AG04450 (cell line): ENCODE measurements at regions of chr1 and their contacts with region 1.

Region 1: GRCh38 chr1:202462342-202463076 is 114.0 kb downstream of the PPP1R12B start:
- DNase-seq: no peak
- H3K4me3 ChIP-seq: no peak overlapping the region
- H3K27ac ChIP-seq: no peak overlapping the region
- H3K27me3 ChIP-seq: no peaks in the 10 kb centered on the region
- CTCF ChIP-seq: no peak

Region 2: DNA sequence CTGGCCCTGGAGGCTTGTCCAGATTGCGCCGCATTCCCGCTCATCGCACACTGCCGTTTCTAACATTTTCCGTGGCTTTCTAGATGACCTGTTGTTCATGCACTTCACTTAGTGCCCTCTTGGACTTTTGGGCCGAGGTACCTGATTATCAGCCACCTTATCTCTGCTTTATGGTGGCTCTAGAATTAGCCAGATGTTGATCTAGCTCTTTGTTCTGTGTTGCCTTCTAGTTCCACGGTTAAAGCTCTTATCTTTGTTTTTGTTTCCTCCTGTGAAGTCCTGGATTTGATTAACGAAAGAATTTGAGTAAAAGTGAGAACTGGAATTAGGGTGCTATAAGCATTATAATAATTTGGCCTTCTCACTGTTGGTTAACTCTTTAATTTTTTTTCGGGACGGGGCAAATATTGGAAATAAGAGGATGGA is 479.1 kb before region 1 on chr1:
- CTCF ChIA-PET with region 1: no interaction called
- POLR2A ChIA-PET with region 1: no interaction called
- DNase-seq: no peak
- H3K4me3 ChIP-seq: peak overlapping the region; percentile 88
- H3K27ac ChIP-seq: peak overlapping the region; percentile 61
- H3K27me3 ChIP-seq: no peaks in the 10 kb centered on the region
- CTCF ChIP-seq: no peak

Region 3: GRCh38 chr1:202405928-202406327 is 56.6 kb before region 1 on chr1:
- CTCF ChIA-PET with region 1: no interaction called
- POLR2A ChIA-PET with region 1: no interaction called
- DNase-seq: no peak
- H3K4me3 ChIP-seq: no peak overlapping the region
- H3K27ac ChIP-seq: no peak overlapping the region
- H3K27me3 ChIP-seq: no peaks in the 10 kb centered on the region
- CTCF ChIP-seq: no peak

Region 4: DNA sequence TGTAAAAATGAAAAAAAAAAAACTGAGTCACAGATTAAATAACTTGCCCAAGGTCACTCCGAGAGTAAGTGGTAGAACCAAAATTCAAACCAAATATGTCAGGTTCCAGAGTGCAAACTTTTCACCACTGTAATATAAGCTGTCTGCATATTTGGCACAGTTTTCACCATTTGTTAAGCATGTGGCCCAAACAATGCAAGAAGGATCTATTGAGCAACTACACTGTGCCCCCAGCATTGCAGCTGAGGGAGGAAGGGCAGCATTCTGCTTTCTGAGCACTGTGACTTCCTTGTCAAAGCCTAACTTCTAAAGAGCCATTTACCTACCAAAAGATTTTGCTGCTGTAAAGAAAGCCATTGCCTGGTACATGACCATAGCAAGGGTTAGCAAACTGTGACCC is 114.3 kb after region 1 on chr1:
- CTCF ChIA-PET with region 1: interaction called, 16 read pairs
- POLR2A ChIA-PET with region 1: no interaction called
- DNase-seq: peak; percentile 63
- H3K4me3 ChIP-seq: no peak overlapping the region
- H3K27ac ChIP-seq: peak overlapping the region; percentile 84
- H3K27me3 ChIP-seq: no peaks in the 10 kb centered on the region
- CTCF ChIP-seq: no peak

Region 5: GRCh38 chr1:202599677-202600431 is 137.3 kb after region 1 on chr1:
- CTCF ChIA-PET with region 1: interaction called, 38 read pairs
- POLR2A ChIA-PET with region 1: no interaction called
- DNase-seq: peak; percentile 71
- H3K4me3 ChIP-seq: no peak overlapping the region
- H3K27ac ChIP-seq: peak overlapping the region; percentile 11
- H3K27me3 ChIP-seq: no peaks in the 10 kb centered on the region
- CTCF ChIP-seq: peak; percentile 90

Region 6: GRCh38 chr1:202615501-202616354 is 153.2 kb after region 1 on chr1:
- CTCF ChIA-PET with region 1: interaction called, 12 read pairs
- POLR2A ChIA-PET with region 1: no interaction called
- DNase-seq: no peak
- H3K4me3 ChIP-seq: no peak overlapping the region
- H3K27ac ChIP-seq: peak overlapping the region; percentile 47
- H3K27me3 ChIP-seq: no peaks in the 10 kb centered on the region
- CTCF ChIP-seq: no peak

Region 7: GRCh38 chr1:202625416-202626360 is 163.2 kb after region 1 on chr1:
- CTCF ChIA-PET with region 1: interaction called, 14 read pairs
- POLR2A ChIA-PET with region 1: no interaction called
- DNase-seq: peak; percentile 46
- H3K4me3 ChIP-seq: no peak overlapping the region
- H3K27ac ChIP-seq: no peak overlapping the region
- H3K27me3 ChIP-seq: peaks cover 6% of the 10 kb centered on the region
- CTCF ChIP-seq: peak; percentile 71

Region 8: GRCh38 chr1:202713110-202713509 is 250.6 kb after region 1 on chr1:
- CTCF ChIA-PET with region 1: interaction called, 83 read pairs
- POLR2A ChIA-PET with region 1: no interaction called
- DNase-seq: no peak
- H3K4me3 ChIP-seq: no peak overlapping the region
- H3K27ac ChIP-seq: no peak overlapping the region
- H3K27me3 ChIP-seq: peaks cover 62% of the 10 kb centered on the region
- CTCF ChIP-seq: no peak